ENCODE measurements at regions of chr13 and their contacts with region 1.

Region 1: GRCh38 chr13:98653463-98653985 is 76.6 kb upstream of the STK24 start:
- DNase-seq: peak; percentile 83
- H3K4me3 Mint-ChIP-seq: no peak overlapping the region
- H3K27ac Mint-ChIP-seq: no peak overlapping the region
- H3K4me1 Mint-ChIP-seq: peaks cover 2% of the 10 kb centered on the region
- H3K27me3 Mint-ChIP-seq: peaks cover 11% of the 10 kb centered on the region

Region 2: GRCh38 chr13:98445340-98446233 is 207.9 kb before region 1 on chr13:
- CTCF ChIA-PET with region 1: interaction called, 142 read pairs
- DNase-seq: peak; percentile 87
- H3K4me3 Mint-ChIP-seq: peak overlapping the region; percentile 28
- H3K27ac Mint-ChIP-seq: peak overlapping the region; percentile 81
- H3K4me1 Mint-ChIP-seq: peaks cover 21% of the 10 kb centered on the region
- H3K27me3 Mint-ChIP-seq: no peaks in the 10 kb centered on the region

Region 3: GRCh38 chr13:98466634-98467236 is 186.8 kb before region 1 on chr13:
- CTCF ChIA-PET with region 1: interaction called, 12 read pairs
- DNase-seq: peak; percentile 50
- H3K4me3 Mint-ChIP-seq: no peak overlapping the region
- H3K27ac Mint-ChIP-seq: peak overlapping the region; percentile 49
- H3K4me1 Mint-ChIP-seq: peaks cover 20% of the 10 kb centered on the region
- H3K27me3 Mint-ChIP-seq: no peaks in the 10 kb centered on the region

Region 4: DNA sequence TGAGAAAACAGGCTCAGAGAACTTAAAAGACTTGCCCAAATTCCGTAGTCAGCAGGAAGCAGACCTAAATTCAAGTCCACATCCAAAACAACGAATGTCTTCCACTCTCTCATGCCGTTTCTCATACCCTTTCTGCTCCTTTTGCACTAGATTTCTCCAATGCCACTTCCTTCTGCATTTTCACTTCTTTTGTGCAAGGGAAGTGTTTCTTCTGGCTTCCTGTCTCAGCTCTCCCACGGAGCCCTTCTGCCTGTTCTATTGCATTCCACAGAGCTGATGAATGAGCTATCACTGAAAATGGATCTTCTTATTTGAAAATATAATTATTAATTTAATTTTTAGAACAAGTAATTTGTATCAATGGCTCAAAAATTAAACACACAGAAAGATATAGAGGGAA is 20.6 kb before region 1 on chr13:
- CTCF ChIA-PET with region 1: interaction called, 13 read pairs
- DNase-seq: no peak
- H3K4me3 Mint-ChIP-seq: no peak overlapping the region
- H3K27ac Mint-ChIP-seq: no peak overlapping the region
- H3K4me1 Mint-ChIP-seq: peaks cover 2% of the 10 kb centered on the region
- H3K27me3 Mint-ChIP-seq: peaks cover 8% of the 10 kb centered on the region

Region 5: DNA sequence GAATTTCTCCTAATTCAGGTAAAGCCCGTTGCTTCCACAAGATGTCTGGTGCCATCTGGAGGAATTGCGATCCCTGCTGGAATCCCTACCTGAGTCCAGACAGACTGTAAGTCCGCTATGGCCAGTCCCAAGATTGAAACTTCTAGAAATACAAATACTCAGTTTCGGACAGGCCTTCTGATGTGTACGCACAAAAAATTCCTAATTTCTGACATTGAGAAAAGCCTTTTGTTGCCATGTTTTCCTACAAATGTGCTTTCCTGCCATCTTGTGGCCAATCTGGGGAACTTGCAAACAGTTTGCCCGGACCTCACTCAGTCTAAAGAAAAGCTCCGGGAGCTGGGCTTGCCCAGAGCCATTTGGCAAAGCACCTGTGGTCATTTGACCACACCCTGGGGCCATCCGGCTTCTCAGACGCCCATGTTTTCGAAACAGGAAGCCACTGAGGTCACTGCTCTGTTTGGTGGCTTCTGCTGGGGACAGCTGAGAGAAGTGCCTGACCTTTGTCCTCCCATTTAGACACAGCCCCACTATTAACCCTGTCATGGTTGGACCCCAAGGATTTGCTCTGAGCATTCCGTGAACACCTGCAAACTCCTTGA is 19.5 kb after region 1 on chr13:
- CTCF ChIA-PET with region 1: interaction called, 14 read pairs
- DNase-seq: peak; percentile 60
- H3K4me3 Mint-ChIP-seq: no peak overlapping the region
- H3K27ac Mint-ChIP-seq: no peak overlapping the region
- H3K4me1 Mint-ChIP-seq: no peaks in the 10 kb centered on the region
- H3K27me3 Mint-ChIP-seq: peaks cover 4% of the 10 kb centered on the region

Region 6: GRCh38 chr13:98858191-98858590 is 204.7 kb after region 1 on chr13:
- CTCF ChIA-PET with region 1: no interaction called
- DNase-seq: no peak
- H3K4me3 Mint-ChIP-seq: no peak overlapping the region
- H3K27ac Mint-ChIP-seq: no peak overlapping the region
- H3K4me1 Mint-ChIP-seq: peaks cover 14% of the 10 kb centered on the region
- H3K27me3 Mint-ChIP-seq: no peaks in the 10 kb centered on the region